Heart right ventricle (tissue), 16 donors: ENCODE measurements at regions of chr7 and their contacts with region 1.

Region 1: DNA sequence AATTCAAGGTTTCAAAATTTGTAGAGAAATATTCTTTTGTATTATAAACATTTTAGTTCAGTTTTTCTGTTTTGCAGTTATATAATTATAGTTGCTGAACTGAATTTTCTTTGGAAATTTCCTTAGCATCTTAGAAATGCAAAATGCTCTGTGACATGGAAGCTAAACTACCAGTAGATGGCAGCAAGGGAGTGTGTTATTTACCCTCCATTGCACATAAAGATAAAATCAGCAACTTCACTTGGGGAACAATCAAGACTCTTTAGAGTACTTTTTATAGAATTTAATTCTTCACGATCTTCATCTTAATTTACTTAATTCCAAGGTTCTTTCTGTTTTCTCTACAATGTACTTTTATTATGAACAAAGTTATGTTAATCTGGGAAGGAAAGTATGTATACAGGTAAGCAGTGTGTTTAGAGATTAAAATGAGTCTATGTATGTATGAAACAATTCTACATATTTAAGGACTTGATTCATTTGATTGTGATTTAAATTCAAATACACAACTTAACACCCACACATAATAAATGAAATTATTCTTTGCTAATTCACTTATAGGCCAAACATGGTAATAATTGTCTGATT is 404.2 kb downstream of the THSD7A start:
- DNase-seq: peak in 1 of 2 donors; percentile 29
- ATAC-seq: peak in 1 of 8 donors; percentile 42
- H3K4me3 ChIP-seq: no peak overlapping the region
- H3K27ac ChIP-seq: no peak overlapping the region
- H3K4me1 ChIP-seq: peaks cover 0 to 8% (median 0%) of the 10 kb centered on the region in 9 donors
- H3K27me3 ChIP-seq: no peaks in the 10 kb centered on the region
- CTCF ChIP-seq: peak; percentile 41 to 89 (median 75)

Region 2: GRCh38 chr7:11607686-11608085 is 179.9 kb after region 1 on chr7:
- intact Hi-C with region 1: no loop called
- DNase-seq: peak; percentile 14 to 37
- ATAC-seq: peak in 3 of 8 donors; percentile 25 to 48 (median 44)
- H3K4me3 ChIP-seq: no peak overlapping the region
- H3K27ac ChIP-seq: no peak overlapping the region
- H3K4me1 ChIP-seq: peaks cover 3 to 38% (median 15%) of the 10 kb centered on the region in 9 donors
- H3K27me3 ChIP-seq: no peaks in the 10 kb centered on the region
- CTCF ChIP-seq: no peak

Region 3: DNA sequence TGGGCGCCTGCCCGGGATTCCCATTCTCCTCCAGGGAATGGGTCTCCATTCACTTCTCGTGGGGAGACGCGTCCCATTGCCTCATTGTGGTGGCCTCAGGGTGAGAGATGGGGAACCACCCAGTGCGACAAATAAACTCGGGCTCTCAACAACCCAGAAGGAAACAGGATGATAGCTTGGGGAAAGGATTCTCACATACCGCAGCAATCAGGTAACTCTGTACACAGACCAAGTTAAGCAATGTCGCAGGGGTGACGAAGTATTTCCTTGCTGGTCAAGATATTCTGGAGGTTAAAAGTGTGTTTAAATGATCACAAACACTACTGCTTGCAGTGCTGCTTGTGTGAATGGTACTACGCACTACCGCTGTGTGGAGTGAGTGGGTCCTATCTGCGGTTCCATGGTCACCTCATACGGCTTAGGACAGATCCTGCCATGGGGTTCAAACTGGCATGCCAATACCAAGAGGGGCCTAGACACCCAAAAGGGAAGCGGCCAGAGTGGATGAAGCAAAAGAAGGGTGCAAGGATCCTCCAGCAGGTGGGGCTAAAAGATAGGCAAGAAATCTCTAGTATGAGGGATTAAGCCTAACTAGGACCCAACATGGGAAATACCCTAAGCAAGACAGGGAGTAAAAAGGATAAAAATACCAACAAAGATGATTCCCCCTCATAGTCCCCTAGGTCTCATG is 639.5 kb after region 1 on chr7:
- intact Hi-C with region 1: loop called in 1 of 10 experiments (anchors 10 kb)
- DNase-seq: peak in 1 of 2 donors; percentile 26
- ATAC-seq: peak in 4 of 8 donors; percentile 33 to 73 (median 62)
- H3K4me3 ChIP-seq: no peak overlapping the region
- H3K27ac ChIP-seq: no peak overlapping the region
- H3K4me1 ChIP-seq: no peaks in the 10 kb centered on the region
- H3K27me3 ChIP-seq: no peaks in the 10 kb centered on the region
- CTCF ChIP-seq: peak; percentile 24 to 66 (median 61)